ENCODE measurements at regions of chr5 and their contacts with region 1.

Region 1: DNA sequence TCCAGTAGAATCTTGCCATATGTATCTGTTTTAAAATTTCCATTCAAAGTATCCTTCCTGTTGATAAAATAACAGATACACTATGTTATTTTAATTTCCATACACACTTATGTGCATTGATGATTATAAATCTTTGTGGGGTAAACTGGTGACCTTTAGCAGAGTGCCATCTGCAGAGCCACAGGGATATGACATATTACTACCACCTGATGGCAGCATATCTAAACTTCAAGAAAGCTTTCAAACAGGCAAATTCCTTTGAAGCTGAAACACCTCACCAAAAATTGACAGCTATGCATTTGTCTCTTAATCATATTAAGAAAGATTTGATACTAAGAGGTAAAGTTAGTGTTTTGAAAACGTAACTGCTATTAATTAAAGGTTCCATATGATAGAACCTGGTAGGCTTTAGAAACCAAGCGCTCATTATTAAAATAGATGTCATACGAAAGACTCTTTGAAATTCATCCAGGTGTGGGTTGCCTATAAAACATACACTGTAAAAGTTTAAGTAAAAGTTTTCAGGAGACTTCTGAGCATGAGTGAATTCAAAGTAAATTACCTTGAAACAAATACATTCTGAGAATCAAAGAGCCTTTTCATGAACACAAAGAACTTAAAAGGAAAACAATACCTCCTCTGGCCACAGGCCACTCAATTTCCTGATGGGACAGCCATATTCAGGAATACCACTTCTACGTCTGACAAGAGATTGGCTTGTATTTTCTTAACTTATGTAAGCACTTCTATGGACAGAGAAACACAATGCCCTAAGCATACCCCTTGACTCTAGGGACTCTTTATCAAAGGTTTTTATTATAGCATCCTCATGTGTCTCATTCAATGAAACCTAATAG is 93.3 kb downstream of the KIAA0825 start:
- DNase-seq: no peak
- H3K4me3 ChIP-seq: no peak overlapping the region
- H3K27ac ChIP-seq: no peak overlapping the region
- H3K4me1 ChIP-seq: no peaks in the 10 kb centered on the region
- H3K27me3 ChIP-seq: no peaks in the 10 kb centered on the region
- CTCF ChIP-seq: peak; percentile 57

Region 2: DNA sequence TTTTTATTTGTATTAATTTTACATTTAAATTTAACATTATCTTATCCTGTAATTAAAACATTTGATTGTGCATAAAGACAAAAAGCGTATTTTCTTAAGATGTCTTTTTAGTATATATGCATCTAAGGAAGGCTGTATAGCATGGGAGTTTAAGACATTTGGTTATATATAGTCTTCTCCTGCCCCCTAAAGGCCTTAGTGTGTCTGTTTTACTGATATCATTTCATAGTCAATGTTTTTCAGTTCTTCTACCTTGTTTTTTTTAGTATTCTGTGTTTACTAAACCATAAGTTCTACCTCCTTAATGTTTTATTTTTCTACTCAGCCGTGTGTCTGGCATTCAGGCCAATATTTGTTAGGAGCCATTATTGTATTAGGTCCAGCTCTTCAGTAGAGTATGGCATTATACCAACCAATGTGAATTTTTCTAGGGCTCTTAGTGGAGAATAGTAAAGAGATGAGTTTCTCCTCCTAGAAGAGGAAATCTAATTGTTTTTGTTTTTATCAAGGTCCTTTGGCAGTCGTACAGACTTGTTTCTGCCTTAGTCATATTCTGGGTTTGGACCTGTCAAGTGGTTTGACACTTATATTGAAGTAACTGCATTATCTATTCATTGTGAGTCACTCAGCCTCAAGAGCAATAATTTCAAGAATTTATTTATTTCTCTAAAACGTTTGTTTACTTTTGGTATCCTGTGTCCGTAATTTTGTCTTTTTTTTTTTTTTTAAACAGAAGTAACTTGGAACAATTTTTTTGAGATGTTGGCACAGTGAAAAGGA is 168.2 kb after region 1 on chr5:
- intact Hi-C with region 1: loop called (anchors 5 kb)
- DNase-seq: no peak
- H3K4me3 ChIP-seq: no peak overlapping the region
- H3K27ac ChIP-seq: no peak overlapping the region
- H3K4me1 ChIP-seq: no peaks in the 10 kb centered on the region
- H3K27me3 ChIP-seq: no peaks in the 10 kb centered on the region
- CTCF ChIP-seq: no peak

Region 3: DNA sequence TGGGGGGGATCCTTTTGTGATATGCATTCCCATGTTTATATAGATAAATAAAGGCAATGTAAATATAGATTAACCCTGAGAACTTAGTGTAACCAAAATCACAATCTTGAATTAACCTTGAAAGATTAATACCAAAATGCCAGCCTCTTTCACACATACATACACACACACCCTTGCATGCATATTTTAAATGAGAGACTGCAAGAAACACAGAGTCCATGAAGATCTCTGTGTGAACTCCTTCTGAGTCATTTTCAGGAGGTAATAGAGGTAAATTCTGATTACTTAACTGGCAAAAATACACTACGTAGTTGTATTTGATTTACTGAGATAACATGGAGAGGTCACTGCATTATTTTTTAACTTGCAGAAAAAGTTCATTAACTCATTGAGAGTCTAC is 211.4 kb after region 1 on chr5:
- intact Hi-C with region 1: loop called (anchors 2 kb)
- DNase-seq: no peak
- H3K4me3 ChIP-seq: no peak overlapping the region
- H3K27ac ChIP-seq: no peak overlapping the region
- H3K4me1 ChIP-seq: no peaks in the 10 kb centered on the region
- H3K27me3 ChIP-seq: no peaks in the 10 kb centered on the region
- CTCF ChIP-seq: no peak